PC-3 (cell line): ENCODE measurements at regions of chr7 and their contacts with region 1.

Region 1: GRCh38 chr7:81447351-81447952 is 322.4 kb downstream of the HGF start:
- DNase-seq: peak; percentile 75
- ATAC-seq: peak; percentile 96
- H3K4me3 ChIP-seq: no peak overlapping the region
- H3K27ac ChIP-seq: no peak overlapping the region
- H3K4me1 ChIP-seq: peaks cover 10% of the 10 kb centered on the region
- H3K27me3 ChIP-seq: no peaks in the 10 kb centered on the region
- CTCF ChIP-seq: peak; percentile 73

Region 2: DNA sequence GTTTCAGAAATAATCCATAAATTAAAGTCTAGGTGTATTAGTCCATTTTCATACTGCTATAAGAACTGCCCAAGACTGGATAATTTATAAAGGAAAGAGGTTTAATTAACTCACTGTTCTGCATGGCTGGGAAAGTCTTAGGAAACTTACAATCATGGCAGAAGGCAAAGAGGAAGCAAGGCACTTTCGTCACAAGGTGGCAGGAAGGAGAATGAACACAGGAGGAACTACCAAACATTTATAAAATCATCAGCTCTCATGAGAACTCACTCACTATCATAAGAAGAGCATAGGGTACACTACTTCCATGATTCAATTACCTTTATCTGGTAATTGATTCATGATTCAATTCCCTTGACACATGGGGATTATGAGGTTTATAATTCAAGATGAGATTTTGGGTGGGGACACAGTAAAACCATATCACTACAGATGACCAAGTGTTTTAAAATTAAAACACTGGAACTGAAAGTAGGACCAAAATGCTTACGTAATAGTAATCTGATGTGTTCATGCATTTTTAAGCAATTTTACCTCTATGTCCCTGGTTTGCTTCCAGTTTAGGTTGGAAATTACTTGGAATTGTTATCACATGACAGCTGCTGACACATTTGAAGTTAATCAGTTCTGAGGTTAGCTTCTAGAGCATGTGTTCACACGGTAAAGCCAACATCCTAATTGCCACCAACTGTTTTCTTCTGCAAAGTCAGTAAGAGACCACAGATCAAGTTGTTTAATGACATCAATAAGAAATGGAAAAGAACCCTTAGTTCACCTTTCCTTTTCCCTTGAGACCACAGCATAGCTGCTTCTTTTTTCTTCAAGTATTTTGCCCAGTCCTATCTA is 480.2 kb before region 1 on chr7:
- CTCF ChIA-PET with region 1: interaction called, 14 read pairs
- POLR2A ChIA-PET with region 1: no interaction called
- intact Hi-C with region 1: no loop called
- DNase-seq: no peak
- ATAC-seq: no peak
- H3K4me3 ChIP-seq: no peak overlapping the region
- H3K27ac ChIP-seq: no peak overlapping the region
- H3K4me1 ChIP-seq: no peaks in the 10 kb centered on the region
- H3K27me3 ChIP-seq: no peaks in the 10 kb centered on the region
- CTCF ChIP-seq: no peak

Region 3: DNA sequence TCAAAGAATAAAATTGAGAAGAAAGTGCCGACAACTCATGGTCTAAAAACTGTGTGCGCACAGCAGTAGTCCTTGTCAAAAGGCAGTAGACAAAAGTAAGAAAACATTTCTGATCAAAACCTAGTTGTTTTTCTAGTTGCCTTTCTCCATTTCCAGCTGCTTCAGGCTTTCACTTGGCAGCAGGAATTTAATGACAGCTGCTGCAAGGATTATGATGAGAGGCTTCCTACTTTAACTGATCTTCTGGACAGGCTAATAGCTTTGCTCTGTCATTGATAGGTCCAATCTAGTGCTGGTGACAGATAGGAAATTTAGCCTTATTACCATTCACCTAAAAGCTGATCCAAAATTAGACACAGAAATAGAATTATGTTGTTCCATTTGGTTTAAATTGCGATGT is 417.9 kb before region 1 on chr7:
- CTCF ChIA-PET with region 1: no interaction called
- POLR2A ChIA-PET with region 1: no interaction called
- intact Hi-C with region 1: loop called (anchors 5 kb)
- DNase-seq: no peak
- ATAC-seq: no peak
- H3K4me3 ChIP-seq: no peak overlapping the region
- H3K27ac ChIP-seq: no peak overlapping the region
- H3K4me1 ChIP-seq: peaks cover 16% of the 10 kb centered on the region
- H3K27me3 ChIP-seq: no peaks in the 10 kb centered on the region
- CTCF ChIP-seq: no peak

Region 4: GRCh38 chr7:81064426-81064825 is 383.0 kb before region 1 on chr7:
- CTCF ChIA-PET with region 1: no interaction called
- POLR2A ChIA-PET with region 1: no interaction called
- intact Hi-C with region 1: no loop called
- DNase-seq: no peak
- ATAC-seq: no peak
- H3K4me3 ChIP-seq: no peak overlapping the region
- H3K27ac ChIP-seq: no peak overlapping the region
- H3K4me1 ChIP-seq: peaks cover 12% of the 10 kb centered on the region
- H3K27me3 ChIP-seq: no peaks in the 10 kb centered on the region
- CTCF ChIP-seq: no peak

Region 5: GRCh38 chr7:81159387-81159786 is 288.1 kb before region 1 on chr7:
- CTCF ChIA-PET with region 1: no interaction called
- POLR2A ChIA-PET with region 1: no interaction called
- intact Hi-C with region 1: loop called (anchors 5 kb)
- DNase-seq: peak; percentile 84
- ATAC-seq: peak; percentile 67
- H3K4me3 ChIP-seq: no peak overlapping the region
- H3K27ac ChIP-seq: peak overlapping the region; percentile 64
- H3K4me1 ChIP-seq: peaks cover 27% of the 10 kb centered on the region
- H3K27me3 ChIP-seq: no peaks in the 10 kb centered on the region
- CTCF ChIP-seq: no peak

Region 6: GRCh38 chr7:81170291-81170690 is 277.2 kb before region 1 on chr7:
- CTCF ChIA-PET with region 1: no interaction called
- POLR2A ChIA-PET with region 1: no interaction called
- intact Hi-C with region 1: no loop called
- DNase-seq: no peak
- ATAC-seq: no peak
- H3K4me3 ChIP-seq: no peak overlapping the region
- H3K27ac ChIP-seq: no peak overlapping the region
- H3K4me1 ChIP-seq: peaks cover 16% of the 10 kb centered on the region
- H3K27me3 ChIP-seq: no peaks in the 10 kb centered on the region
- CTCF ChIP-seq: no peak

Region 7: GRCh38 chr7:81298951-81299669 is 148.3 kb before region 1 on chr7:
- CTCF ChIA-PET with region 1: no interaction called
- POLR2A ChIA-PET with region 1: no interaction called
- intact Hi-C with region 1: loop called (anchors 5 kb)
- DNase-seq: peak; percentile 89
- ATAC-seq: peak; percentile 99
- H3K4me3 ChIP-seq: peak overlapping the region; percentile 8; the same call in 1 of the 2 replicates
- H3K27ac ChIP-seq: peak overlapping the region; percentile 57
- H3K4me1 ChIP-seq: peaks cover 29% of the 10 kb centered on the region
- H3K27me3 ChIP-seq: no peaks in the 10 kb centered on the region
- CTCF ChIP-seq: no peak

Region 8: DNA sequence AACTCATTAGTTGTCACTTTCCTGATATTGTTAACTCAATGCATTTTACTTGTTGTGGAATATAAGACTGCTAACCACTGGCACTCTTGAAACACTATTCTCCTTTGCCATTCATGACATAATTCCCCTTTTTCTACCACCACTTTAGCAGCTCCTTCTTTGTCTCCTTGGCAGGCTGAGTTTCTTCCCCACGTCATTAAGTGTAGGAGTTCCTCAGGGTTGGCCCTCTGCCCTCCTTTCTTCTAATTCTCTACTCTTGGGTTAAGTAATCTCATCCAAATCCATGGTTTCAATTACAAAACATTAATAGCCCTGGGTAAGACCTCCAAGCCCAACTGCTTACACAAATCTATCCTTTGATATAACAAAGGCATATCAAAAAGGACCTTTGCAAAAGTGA is 147.3 kb after region 1 on chr7:
- CTCF ChIA-PET with region 1: no interaction called
- POLR2A ChIA-PET with region 1: no interaction called
- intact Hi-C with region 1: no loop called
- DNase-seq: no peak
- ATAC-seq: no peak
- H3K4me3 ChIP-seq: no peak overlapping the region
- H3K27ac ChIP-seq: no peak overlapping the region
- H3K4me1 ChIP-seq: no peaks in the 10 kb centered on the region
- H3K27me3 ChIP-seq: no peaks in the 10 kb centered on the region
- CTCF ChIP-seq: no peak